Activated CD8-positive, alpha-beta T cell treated with anti-CD3 and anti-CD28 coated beads, Interleukin-2, amount 10 ng/mL, durations not matched to agents 7 days and 5 days (primary cell): ENCODE measurements at regions of chr13 and their contacts with region 1.

Region 1: GRCh38 chr13:19863323-19864023 is at the start of gene ZMYM5:
- DNase-seq: peak; percentile 98
- ATAC-seq: peak; percentile 88
- H3K4me3 Mint-ChIP-seq: peak within 1 kb of the TSS; percentile 98
- H3K27ac Mint-ChIP-seq: peak within 1 kb of the TSS; percentile 99
- H3K4me1 Mint-ChIP-seq: peaks cover 39% of the 10 kb centered on the region
- H3K27me3 Mint-ChIP-seq: no peaks in the 10 kb centered on the region
- total RNA-seq, gene ZMYM5: 15.8 to 18.2 TPM

Region 2: GRCh38 chr13:19782049-19782726 is 81.3 kb before region 1 on chr13:
- CTCF ChIA-PET with region 1: interaction called, 7 read pairs
- POLR2A ChIA-PET with region 1: interaction called, 26 read pairs
- DNase-seq: peak; percentile 65
- ATAC-seq: peak; percentile 63
- H3K4me3 Mint-ChIP-seq: peak overlapping the region; percentile 96
- H3K27ac Mint-ChIP-seq: peak overlapping the region; percentile 99
- H3K4me1 Mint-ChIP-seq: peaks cover 11% of the 10 kb centered on the region
- H3K27me3 Mint-ChIP-seq: peaks cover 2% of the 10 kb centered on the region

Region 3: DNA sequence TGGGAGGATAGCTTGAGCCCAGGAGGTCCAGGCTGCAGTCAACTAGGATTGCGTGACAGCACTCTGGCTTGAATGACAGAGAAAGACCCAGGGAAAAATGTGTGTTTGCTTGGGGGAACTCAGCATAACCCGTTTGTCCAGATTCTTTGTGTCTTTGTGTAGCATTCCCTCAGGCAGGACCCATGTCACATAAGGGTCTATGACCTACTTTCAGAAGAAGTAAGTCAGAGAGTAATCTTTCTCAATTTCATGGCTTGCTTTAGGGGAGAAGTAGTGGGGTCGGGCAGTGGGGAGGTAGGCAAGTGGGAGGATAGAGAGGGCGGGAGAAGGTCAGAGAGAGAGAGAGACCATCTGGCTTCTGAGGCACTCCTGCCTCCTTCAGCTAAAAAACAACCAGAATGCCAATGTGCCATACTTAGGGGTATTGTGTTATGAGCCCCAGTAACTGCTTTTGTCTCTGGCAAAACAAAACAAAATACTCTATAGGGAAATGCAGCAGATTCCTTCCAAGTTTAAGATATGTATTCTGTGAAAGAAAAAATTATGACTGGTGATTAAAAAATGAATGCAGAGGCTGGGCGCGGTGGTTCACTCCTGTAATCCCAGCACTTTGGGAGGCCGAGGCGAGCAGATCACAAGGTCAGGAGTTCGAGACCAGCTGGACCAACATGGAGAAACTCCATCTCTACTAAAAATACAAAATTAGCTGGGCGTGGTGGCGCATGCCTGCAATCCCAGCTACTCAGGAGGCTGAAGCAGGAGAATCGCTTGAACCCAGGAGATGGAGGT is 68.6 kb before region 1 on chr13:
- CTCF ChIA-PET with region 1: no interaction called
- POLR2A ChIA-PET with region 1: no interaction called
- DNase-seq: no peak
- ATAC-seq: no peak
- H3K4me3 Mint-ChIP-seq: no peak overlapping the region
- H3K27ac Mint-ChIP-seq: no peak overlapping the region
- H3K4me1 Mint-ChIP-seq: peaks cover 2% of the 10 kb centered on the region
- H3K27me3 Mint-ChIP-seq: no peaks in the 10 kb centered on the region

Region 4: GRCh38 chr13:19852766-19853165 is 10.7 kb before region 1 on chr13:
- CTCF ChIA-PET with region 1: interaction called, 15 read pairs
- POLR2A ChIA-PET with region 1: interaction called, 9 read pairs
- DNase-seq: no peak
- ATAC-seq: no peak
- H3K4me3 Mint-ChIP-seq: no peak overlapping the region
- H3K27ac Mint-ChIP-seq: peak overlapping the region; percentile 39
- H3K4me1 Mint-ChIP-seq: peaks cover 12% of the 10 kb centered on the region
- H3K27me3 Mint-ChIP-seq: no peaks in the 10 kb centered on the region